CD4-positive, alpha-beta memory T cell (primary cell): ENCODE measurements at regions of chr12 and their contacts with region 1.

Region 1: GRCh38 chr12:12032851-12033588 is 37.7 kb upstream of the BCL2L14 start:
- DNase-seq: peak; percentile 66 to 74 (median 70)
- H3K4me3 ChIP-seq: peak overlapping the region; percentile 52 to 80
- H3K4me3 Mint-ChIP-seq: peak overlapping the region; percentile 77 to 93 (median 86)
- H3K27ac ChIP-seq: peak overlapping the region; percentile 53
- H3K27ac Mint-ChIP-seq: peak overlapping the region; percentile 77 to 96 (median 92)
- H3K4me1 ChIP-seq: peaks cover 20% of the 10 kb centered on the region
- H3K4me1 Mint-ChIP-seq: peaks cover 19 to 24% (median 21%) of the 10 kb centered on the region in 4 donors
- H3K27me3 ChIP-seq: no peaks in the 10 kb centered on the region
- H3K27me3 Mint-ChIP-seq: peaks cover 0 to 3% of the 10 kb centered on the region in 2 donors

Region 2: DNA sequence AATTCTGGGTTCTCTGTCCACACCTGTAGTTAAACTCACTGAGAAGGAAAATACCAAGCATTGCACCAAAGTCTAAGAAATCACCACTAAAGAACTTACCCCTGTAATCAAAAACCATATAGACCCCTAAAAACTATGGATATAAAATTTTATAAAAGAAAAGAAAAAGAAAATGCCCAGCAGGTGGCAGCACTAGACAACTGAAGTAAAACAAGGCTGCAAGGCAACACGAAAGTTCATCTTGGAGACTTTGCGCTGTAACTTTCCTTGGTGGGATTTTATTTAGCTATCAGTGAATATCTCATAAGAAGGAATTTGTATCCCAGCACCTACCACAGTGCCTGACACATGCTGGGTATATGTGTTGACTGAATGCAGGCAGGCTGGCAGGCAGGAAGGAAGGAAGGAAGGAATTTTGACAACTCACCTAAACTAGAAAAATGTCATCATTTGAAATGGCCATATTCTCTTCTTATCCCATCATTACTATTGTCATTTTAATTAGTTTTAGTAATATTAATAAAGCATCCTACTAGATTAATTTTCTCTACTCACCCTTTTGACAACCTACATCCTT is 451.8 kb before region 1 on chr12:
- CTCF ChIA-PET with region 1: interaction called, 388 read pairs
- POLR2A ChIA-PET with region 1: interaction called, 8 read pairs
- intact Hi-C with region 1: loop called (anchors 1 kb)
- DNase-seq: peak; percentile 62 to 71 (median 67)
- H3K4me3 ChIP-seq: no peak overlapping the region
- H3K4me3 Mint-ChIP-seq: peak overlapping the region in 1 of 8 donors; percentile 59
- H3K27ac ChIP-seq: no peak overlapping the region
- H3K27ac Mint-ChIP-seq: peak overlapping the region in 1 of 7 donors; percentile 79
- H3K4me1 ChIP-seq: peaks cover 3% of the 10 kb centered on the region
- H3K4me1 Mint-ChIP-seq: peaks cover 0 to 4% (median 3%) of the 10 kb centered on the region in 4 donors
- H3K27me3 ChIP-seq: no peaks in the 10 kb centered on the region
- H3K27me3 Mint-ChIP-seq: peaks cover 2 to 3% of the 10 kb centered on the region in 2 donors

Region 3: GRCh38 chr12:11648831-11649702 is 384.0 kb before region 1 on chr12 and contains the start of gene ETV6:
- CTCF ChIA-PET with region 1: interaction called, 16 read pairs
- POLR2A ChIA-PET with region 1: interaction called, 25 read pairs
- intact Hi-C with region 1: loop called (anchors 1 kb)
- DNase-seq: peak; percentile 79 to 84 (median 81)
- H3K4me3 ChIP-seq: peak within 1 kb of the TSS; percentile 59 to 97
- H3K4me3 Mint-ChIP-seq: peak within 1 kb of the TSS; percentile 95 to 99 (median 98)
- H3K27ac ChIP-seq: peak within 1 kb of the TSS; percentile 79
- H3K27ac Mint-ChIP-seq: peak within 1 kb of the TSS; percentile 85 to 99 (median 98)
- H3K4me1 ChIP-seq: peaks cover 32% of the 10 kb centered on the region
- H3K4me1 Mint-ChIP-seq: peaks cover 24 to 48% (median 27%) of the 10 kb centered on the region in 4 donors
- H3K27me3 ChIP-seq: no peaks in the 10 kb centered on the region
- H3K27me3 Mint-ChIP-seq: no peaks in the 10 kb centered on the region
- total RNA-seq, gene ETV6: 41.3 to 43.9 TPM

Region 4: DNA sequence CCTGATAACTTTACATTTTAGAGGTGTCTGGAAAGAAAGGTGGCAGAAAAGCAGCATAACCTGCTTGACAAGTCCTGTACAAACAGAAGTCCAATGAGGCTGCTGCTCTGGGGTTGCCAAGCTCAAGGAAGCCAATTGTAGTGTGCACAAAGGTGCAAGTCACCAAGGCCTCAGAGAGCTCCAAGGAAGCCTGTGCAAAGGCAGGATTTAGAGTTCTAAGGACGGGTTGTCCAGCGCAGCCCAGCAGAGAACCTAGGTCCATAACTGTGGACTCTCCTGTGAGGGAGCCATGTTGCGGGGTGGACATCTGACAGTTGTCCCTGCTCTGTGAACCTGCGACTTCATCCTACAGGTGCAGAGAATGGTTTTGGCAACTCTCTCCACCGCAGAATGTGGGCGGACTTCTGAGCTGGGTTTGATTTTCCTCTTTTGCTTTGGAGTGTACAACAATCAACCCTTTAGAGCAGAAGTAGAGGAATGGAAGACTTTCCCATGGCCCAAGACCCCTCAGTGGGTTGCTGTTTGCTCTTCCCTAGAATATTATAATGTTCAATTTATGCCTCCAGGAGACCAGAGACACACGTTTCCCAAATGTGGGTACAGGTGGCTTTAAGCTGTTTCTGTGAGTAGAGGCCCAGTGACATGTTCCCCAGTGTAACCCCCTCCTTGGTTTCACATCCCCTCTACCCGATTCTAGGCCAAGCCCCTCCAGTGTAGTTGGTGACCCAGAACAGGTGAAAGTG is 302.6 kb before region 1 on chr12:
- CTCF ChIA-PET with region 1: interaction called, 23 read pairs
- POLR2A ChIA-PET with region 1: interaction called, 7 read pairs
- intact Hi-C with region 1: loop called (anchors 5 kb)
- DNase-seq: no peak
- H3K4me3 ChIP-seq: peak overlapping the region in 1 of 2 donors; percentile 14
- H3K4me3 Mint-ChIP-seq: peak overlapping the region; percentile 21 to 94 (median 82)
- H3K27ac ChIP-seq: peak overlapping the region; percentile 30
- H3K27ac Mint-ChIP-seq: peak overlapping the region; percentile 79 to 97 (median 96)
- H3K4me1 ChIP-seq: peaks cover 81% of the 10 kb centered on the region
- H3K4me1 Mint-ChIP-seq: peaks cover 60 to 85% (median 73%) of the 10 kb centered on the region in 4 donors
- H3K27me3 ChIP-seq: no peaks in the 10 kb centered on the region
- H3K27me3 Mint-ChIP-seq: no peaks in the 10 kb centered on the region

Region 5: DNA sequence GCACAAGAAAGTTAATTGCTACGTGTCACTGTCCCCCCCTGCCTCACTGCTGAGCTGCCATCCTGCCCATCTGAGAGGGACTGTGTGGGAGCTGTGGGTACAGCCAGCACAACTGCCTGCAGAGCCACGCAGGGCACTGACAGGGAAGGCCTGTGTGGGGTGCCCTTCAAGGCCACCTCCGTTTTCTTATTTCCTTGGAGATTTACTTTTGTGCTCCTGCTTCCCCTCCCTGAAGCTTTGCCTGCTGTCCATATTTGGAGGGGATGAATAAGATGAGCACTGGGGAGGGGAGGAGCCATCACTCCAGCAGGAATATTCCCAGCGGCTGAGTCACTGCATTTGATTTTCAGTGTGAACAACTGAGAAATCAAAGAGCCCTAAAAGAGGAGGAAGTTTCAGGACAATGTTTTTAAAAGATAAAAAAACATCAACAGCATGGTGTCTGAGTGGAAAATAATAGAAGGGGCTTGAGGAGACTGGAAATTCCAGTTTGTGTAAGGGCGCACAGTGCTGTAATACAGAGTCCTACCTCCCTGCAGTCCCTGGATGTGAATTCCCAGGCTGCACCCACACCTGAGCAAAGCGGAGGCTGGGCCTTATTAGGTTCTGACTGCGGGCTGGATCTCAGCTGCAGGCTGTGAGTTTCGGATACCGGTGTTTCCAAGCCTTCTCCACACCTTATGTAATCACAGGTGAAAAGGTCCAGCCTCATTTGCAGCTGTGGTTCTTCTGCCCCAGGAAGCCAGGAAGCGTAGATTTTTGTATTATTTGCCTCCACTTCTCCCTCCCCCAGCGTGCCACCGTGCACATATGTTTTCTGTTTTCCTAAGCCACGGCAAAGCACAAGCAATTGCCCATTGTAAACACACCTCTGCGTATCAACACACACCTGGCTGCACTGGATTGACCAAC is 154.9 kb before region 1 on chr12:
- CTCF ChIA-PET with region 1: no interaction called
- POLR2A ChIA-PET with region 1: interaction called, 3 read pairs
- intact Hi-C with region 1: loop called (anchors 5 kb)
- DNase-seq: no peak
- H3K4me3 ChIP-seq: no peak overlapping the region
- H3K4me3 Mint-ChIP-seq: no peak overlapping the region
- H3K27ac ChIP-seq: no peak overlapping the region
- H3K27ac Mint-ChIP-seq: peak overlapping the region in 3 of 7 donors; percentile 37 to 74 (median 56)
- H3K4me1 ChIP-seq: peaks cover 30% of the 10 kb centered on the region
- H3K4me1 Mint-ChIP-seq: peaks cover 21 to 44% (median 33%) of the 10 kb centered on the region in 4 donors
- H3K27me3 ChIP-seq: no peaks in the 10 kb centered on the region
- H3K27me3 Mint-ChIP-seq: no peaks in the 10 kb centered on the region

Region 6: DNA sequence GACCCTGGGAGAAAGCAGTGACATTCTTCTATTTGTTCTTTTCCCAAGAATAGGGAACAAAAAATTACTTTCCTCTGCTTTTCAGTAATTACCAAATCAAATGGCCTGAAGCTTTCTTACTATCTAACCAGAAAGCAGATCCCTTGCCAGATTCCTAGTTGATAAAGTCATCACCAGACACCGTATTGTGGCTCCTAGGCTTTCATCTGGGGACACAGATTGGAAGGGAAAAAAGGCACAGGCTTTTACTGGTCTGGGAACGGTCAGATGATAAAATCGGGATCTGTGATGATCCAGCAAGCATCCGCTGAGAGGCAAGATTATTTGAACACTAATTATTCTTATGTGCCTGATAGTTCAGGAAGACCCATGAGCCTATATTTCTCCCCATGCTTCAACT is 41.4 kb before region 1 on chr12:
- CTCF ChIA-PET with region 1: no interaction called
- POLR2A ChIA-PET with region 1: no interaction called
- intact Hi-C with region 1: no loop called
- DNase-seq: no peak
- H3K4me3 ChIP-seq: no peak overlapping the region
- H3K4me3 Mint-ChIP-seq: no peak overlapping the region
- H3K27ac ChIP-seq: no peak overlapping the region
- H3K27ac Mint-ChIP-seq: no peak overlapping the region
- H3K4me1 ChIP-seq: no peaks in the 10 kb centered on the region
- H3K4me1 Mint-ChIP-seq: peaks cover 10 to 29% (median 11%) of the 10 kb centered on the region in 4 donors
- H3K27me3 ChIP-seq: no peaks in the 10 kb centered on the region
- H3K27me3 Mint-ChIP-seq: no peaks in the 10 kb centered on the region

Region 7: GRCh38 chr12:12294215-12295005 is 261.4 kb after region 1 on chr12:
- CTCF ChIA-PET with region 1: no interaction called
- POLR2A ChIA-PET with region 1: no interaction called
- intact Hi-C with region 1: no loop called
- DNase-seq: no peak
- H3K4me3 ChIP-seq: no peak overlapping the region
- H3K4me3 Mint-ChIP-seq: no peak overlapping the region
- H3K27ac ChIP-seq: no peak overlapping the region
- H3K27ac Mint-ChIP-seq: no peak overlapping the region
- H3K4me1 ChIP-seq: no peaks in the 10 kb centered on the region
- H3K4me1 Mint-ChIP-seq: peaks cover 0 to 7% (median 2%) of the 10 kb centered on the region in 4 donors
- H3K27me3 ChIP-seq: no peaks in the 10 kb centered on the region
- H3K27me3 Mint-ChIP-seq: peaks cover 0 to 4% of the 10 kb centered on the region in 2 donors

Region 8: DNA sequence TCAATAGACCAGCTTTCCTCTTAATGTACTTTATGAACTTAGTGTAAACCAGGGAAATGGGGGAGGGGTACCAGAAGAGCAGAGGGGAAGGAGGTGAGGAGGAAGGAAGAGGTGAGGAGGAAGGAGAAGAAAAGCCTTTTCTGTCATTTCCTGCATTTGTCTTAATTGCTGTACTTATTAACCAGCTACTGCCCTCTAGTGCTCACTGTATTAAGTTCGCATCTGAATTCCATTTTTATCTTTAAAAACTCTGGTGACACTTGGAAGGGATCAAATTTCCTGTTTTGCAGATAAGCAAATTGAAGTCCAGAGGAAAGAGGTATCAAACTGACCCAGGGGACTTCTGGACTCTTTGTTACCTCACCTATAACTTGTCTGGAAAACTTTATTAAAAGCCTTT is 294.8 kb after region 1 on chr12:
- CTCF ChIA-PET with region 1: interaction called, 22 read pairs
- POLR2A ChIA-PET with region 1: no interaction called
- intact Hi-C with region 1: loop called (anchors 1 kb)
- DNase-seq: peak; percentile 37 to 62 (median 56)
- H3K4me3 ChIP-seq: no peak overlapping the region
- H3K4me3 Mint-ChIP-seq: no peak overlapping the region
- H3K27ac ChIP-seq: no peak overlapping the region
- H3K27ac Mint-ChIP-seq: peak overlapping the region in 4 of 7 donors; percentile 25 to 82 (median 51)
- H3K4me1 ChIP-seq: peaks cover 9% of the 10 kb centered on the region
- H3K4me1 Mint-ChIP-seq: peaks cover 7 to 9% (median 9%) of the 10 kb centered on the region in 4 donors
- H3K27me3 ChIP-seq: no peaks in the 10 kb centered on the region
- H3K27me3 Mint-ChIP-seq: no peaks in the 10 kb centered on the region

Region 9: DNA sequence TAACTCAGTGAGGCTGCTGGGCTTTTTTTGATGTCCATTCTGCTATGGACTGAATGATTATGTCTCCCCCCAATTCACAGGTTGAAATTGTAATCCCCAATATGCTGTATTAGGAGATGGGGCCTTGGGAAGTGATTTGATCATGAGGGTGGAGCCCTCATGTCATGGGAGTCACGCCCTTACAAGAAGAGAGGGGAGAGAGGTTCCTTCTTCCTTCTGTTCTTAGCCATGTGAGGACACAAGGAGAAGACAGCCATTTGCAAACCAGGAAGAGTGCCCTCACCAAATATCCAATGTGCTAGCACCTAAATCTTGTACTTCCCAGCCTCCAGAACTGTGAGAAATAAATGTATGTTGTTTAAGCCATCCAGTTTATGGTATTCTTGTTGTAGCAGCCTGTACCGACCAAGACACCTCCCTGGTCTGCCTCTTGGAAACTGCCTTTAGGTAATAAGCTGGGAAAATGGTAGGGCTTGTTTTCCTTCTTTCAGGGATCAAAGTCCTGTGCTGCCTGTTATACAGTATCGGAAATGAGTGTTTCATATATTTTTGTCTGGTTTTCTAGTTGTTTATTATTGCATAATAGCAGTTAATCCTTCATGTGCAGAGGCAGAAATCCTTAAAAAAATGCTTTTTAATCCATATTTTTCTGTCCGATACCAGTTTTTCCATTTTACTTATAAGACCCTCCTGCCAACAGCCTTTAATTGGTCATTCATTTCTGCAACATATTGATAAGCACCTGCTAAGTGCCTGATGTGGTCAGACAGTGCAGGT is 340.1 kb after region 1 on chr12:
- CTCF ChIA-PET with region 1: no interaction called
- POLR2A ChIA-PET with region 1: no interaction called
- intact Hi-C with region 1: no loop called
- DNase-seq: no peak
- H3K4me3 ChIP-seq: no peak overlapping the region
- H3K4me3 Mint-ChIP-seq: no peak overlapping the region
- H3K27ac ChIP-seq: no peak overlapping the region
- H3K27ac Mint-ChIP-seq: peak overlapping the region; percentile 13 to 81 (median 39)
- H3K4me1 ChIP-seq: peaks cover 19% of the 10 kb centered on the region
- H3K4me1 Mint-ChIP-seq: peaks cover 23 to 28% (median 25%) of the 10 kb centered on the region in 4 donors
- H3K27me3 ChIP-seq: no peaks in the 10 kb centered on the region
- H3K27me3 Mint-ChIP-seq: no peaks in the 10 kb centered on the region

Region 10: GRCh38 chr12:12384571-12385340 is 351.7 kb after region 1 on chr12:
- CTCF ChIA-PET with region 1: no interaction called
- POLR2A ChIA-PET with region 1: no interaction called
- intact Hi-C with region 1: no loop called
- DNase-seq: peak in 4 of 5 donors; percentile 46 to 48 (median 47)
- H3K4me3 ChIP-seq: peak overlapping the region in 1 of 2 donors; percentile 9
- H3K4me3 Mint-ChIP-seq: peak overlapping the region; percentile 59 to 85 (median 74)
- H3K27ac ChIP-seq: peak overlapping the region; percentile 50
- H3K27ac Mint-ChIP-seq: peak overlapping the region; percentile 86 to 99 (median 96)
- H3K4me1 ChIP-seq: peaks cover 87% of the 10 kb centered on the region
- H3K4me1 Mint-ChIP-seq: peaks cover 46 to 87% (median 68%) of the 10 kb centered on the region in 4 donors
- H3K27me3 ChIP-seq: no peaks in the 10 kb centered on the region
- H3K27me3 Mint-ChIP-seq: no peaks in the 10 kb centered on the region